ENCODE measurements at regions of chr15 and their contacts with region 1.

Region 1: DNA sequence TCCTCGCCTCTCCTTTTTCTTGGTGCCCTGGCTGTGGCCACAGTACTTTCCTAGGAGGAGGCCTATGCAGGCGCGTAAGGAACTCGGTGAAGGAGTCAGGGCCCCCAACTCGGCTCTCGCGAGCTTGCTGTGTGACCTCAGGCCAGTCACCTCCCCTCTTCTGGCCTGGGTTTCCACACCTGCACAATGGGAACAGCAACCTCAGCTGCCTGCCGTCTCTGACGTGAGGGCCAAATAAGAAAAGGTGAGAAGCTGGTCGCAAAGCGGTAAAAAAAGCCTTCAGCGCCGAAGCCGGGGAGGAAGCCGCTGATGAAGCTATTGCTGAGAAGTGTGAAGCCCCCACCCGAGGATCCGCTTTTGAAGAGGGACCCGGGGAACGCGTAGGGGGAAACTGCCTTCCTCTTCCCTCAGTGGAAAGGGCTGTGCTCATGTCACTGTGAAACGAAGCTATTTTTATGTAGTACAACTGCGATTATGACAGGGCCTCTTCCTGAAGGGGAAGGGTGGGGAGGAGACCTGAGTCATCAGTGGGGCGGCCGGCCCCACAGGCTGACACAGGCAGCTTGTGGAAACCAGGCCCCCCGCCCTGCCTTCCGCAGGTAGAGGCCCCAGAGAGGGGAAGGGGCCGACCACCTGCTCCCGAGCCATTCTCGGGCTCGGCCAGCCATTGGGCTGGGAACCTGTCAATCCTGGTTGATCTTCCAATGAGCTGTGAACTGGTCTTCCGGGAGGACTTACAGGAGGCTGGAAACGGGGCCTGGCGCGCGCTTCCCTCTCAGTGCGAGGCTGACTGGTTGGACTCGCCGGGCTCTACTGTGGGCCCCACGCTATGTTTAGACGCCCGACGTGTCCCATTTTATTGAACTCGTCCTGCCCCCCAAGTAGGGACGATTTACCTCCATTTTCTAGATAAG is 18.0 kb upstream of the ANKDD1A start:
- DNase-seq: peak; percentile 99
- H3K4me3 Mint-ChIP-seq: peak overlapping the region; percentile 98
- H3K27ac Mint-ChIP-seq: peak overlapping the region; percentile 99
- H3K4me1 Mint-ChIP-seq: peaks cover 62% of the 10 kb centered on the region
- H3K27me3 Mint-ChIP-seq: no peaks in the 10 kb centered on the region

Region 2: GRCh38 chr15:63504247-63504978 is 1389.3 kb before region 1 on chr15 and contains the start of gene USP3:
- CTCF ChIA-PET with region 1: no interaction called
- intact Hi-C with region 1: loop called (anchors 5 kb)
- DNase-seq: peak; percentile 94
- H3K4me3 Mint-ChIP-seq: peak within 1 kb of the TSS; percentile 85
- H3K27ac Mint-ChIP-seq: peak within 1 kb of the TSS; percentile 97
- H3K4me1 Mint-ChIP-seq: peaks cover 78% of the 10 kb centered on the region
- H3K27me3 Mint-ChIP-seq: no peaks in the 10 kb centered on the region
- total RNA-seq, gene USP3: 49.9 to 52.2 TPM

Region 3: GRCh38 chr15:64381000-64381752 is 512.6 kb before region 1 on chr15 and contains the start of gene PCLAF:
- CTCF ChIA-PET with region 1: no interaction called
- intact Hi-C with region 1: loop called (anchors 2 kb)
- DNase-seq: peak; percentile 97
- H3K4me3 Mint-ChIP-seq: peak within 1 kb of the TSS; percentile 99
- H3K27ac Mint-ChIP-seq: peak within 1 kb of the TSS; percentile 92
- H3K4me1 Mint-ChIP-seq: peaks cover 19% of the 10 kb centered on the region
- H3K27me3 Mint-ChIP-seq: no peaks in the 10 kb centered on the region
- total RNA-seq, gene PCLAF: 117 to 118 TPM

Region 4: DNA sequence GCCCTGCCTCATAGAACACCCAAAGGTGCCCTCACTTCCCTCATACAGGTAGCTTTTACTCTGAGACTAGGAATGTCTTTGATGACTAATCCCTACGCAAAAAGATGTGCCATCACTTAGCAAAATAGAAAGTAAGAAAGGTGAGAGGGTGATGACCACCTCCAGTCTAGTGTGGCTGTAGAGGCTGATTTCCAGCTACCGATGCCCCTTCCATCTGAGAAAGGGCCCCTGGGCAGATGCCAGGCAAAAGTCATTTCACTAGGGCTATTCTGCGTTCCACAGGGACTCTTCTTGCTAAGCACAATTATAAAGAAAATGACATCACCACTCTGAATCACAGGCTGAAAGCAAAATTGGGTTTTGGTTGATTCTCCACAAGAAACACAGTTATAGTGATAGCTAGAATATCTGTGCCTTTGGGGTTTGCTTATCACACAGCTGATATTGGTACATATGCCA is 195.8 kb before region 1 on chr15:
- CTCF ChIA-PET with region 1: no interaction called
- intact Hi-C with region 1: loop called (anchors 2 kb)
- DNase-seq: peak; percentile 46
- H3K4me3 Mint-ChIP-seq: no peak overlapping the region
- H3K27ac Mint-ChIP-seq: peak overlapping the region; percentile 51
- H3K4me1 Mint-ChIP-seq: peaks cover 66% of the 10 kb centered on the region
- H3K27me3 Mint-ChIP-seq: no peaks in the 10 kb centered on the region

Region 5: GRCh38 chr15:64836023-64836536 is 57.7 kb before region 1 on chr15:
- CTCF ChIA-PET with region 1: interaction called, 17 read pairs
- intact Hi-C with region 1: loop called (anchors 1 kb)
- DNase-seq: no peak
- H3K4me3 Mint-ChIP-seq: peak overlapping the region; percentile 55
- H3K27ac Mint-ChIP-seq: peak overlapping the region; percentile 64
- H3K4me1 Mint-ChIP-seq: peaks cover 36% of the 10 kb centered on the region
- H3K27me3 Mint-ChIP-seq: no peaks in the 10 kb centered on the region

Region 6: DNA sequence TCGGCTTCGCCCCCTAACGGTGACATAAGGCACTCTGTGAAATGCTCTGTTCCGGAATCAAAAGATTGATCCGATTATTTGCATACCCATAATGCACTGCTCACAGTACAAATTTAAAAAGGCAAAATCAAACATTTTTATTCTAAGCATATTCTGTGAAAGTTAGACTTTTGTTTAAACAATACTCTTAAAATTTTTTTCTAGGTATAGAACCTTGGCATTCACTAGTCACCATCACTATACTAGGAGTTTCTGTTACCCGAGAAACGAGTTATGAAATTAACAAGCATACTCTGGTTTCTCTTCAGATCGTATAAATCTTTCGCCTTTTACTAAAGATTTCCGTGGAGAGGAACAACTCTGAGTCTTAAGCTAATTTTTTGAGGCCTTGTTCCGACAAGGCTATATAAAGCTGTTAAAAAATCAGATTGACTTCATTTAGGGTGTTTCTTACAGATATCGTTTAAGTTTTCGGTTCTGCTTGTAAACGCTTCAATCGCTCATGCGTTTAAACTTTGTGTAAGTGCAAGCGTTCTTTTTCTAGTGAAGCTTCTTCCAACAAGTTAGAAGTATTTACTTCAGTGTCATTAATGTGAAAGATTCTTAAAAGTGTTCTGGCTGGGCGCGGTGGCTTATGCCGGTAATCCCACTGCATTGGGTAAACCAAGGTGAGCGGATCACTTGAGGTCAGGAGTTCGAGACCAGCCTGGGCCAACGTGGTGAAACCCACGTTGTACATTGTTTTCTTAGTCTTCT is 410.8 kb after region 1 on chr15 and contains the start of gene RNU5B-1:
- CTCF ChIA-PET with region 1: no interaction called
- intact Hi-C with region 1: loop called (anchors 2 kb)
- DNase-seq: peak; percentile 86
- H3K4me3 Mint-ChIP-seq: peak within 1 kb of the TSS; percentile 89
- H3K27ac Mint-ChIP-seq: peak within 1 kb of the TSS; percentile 97
- H3K4me1 Mint-ChIP-seq: peaks cover 24% of the 10 kb centered on the region
- H3K27me3 Mint-ChIP-seq: peaks cover 4% of the 10 kb centered on the region
- total RNA-seq, gene RNU5B-1: not detected